Caco-2 (cell line): ENCODE measurements at regions of chr7 and their contacts with region 1.

Region 1: DNA sequence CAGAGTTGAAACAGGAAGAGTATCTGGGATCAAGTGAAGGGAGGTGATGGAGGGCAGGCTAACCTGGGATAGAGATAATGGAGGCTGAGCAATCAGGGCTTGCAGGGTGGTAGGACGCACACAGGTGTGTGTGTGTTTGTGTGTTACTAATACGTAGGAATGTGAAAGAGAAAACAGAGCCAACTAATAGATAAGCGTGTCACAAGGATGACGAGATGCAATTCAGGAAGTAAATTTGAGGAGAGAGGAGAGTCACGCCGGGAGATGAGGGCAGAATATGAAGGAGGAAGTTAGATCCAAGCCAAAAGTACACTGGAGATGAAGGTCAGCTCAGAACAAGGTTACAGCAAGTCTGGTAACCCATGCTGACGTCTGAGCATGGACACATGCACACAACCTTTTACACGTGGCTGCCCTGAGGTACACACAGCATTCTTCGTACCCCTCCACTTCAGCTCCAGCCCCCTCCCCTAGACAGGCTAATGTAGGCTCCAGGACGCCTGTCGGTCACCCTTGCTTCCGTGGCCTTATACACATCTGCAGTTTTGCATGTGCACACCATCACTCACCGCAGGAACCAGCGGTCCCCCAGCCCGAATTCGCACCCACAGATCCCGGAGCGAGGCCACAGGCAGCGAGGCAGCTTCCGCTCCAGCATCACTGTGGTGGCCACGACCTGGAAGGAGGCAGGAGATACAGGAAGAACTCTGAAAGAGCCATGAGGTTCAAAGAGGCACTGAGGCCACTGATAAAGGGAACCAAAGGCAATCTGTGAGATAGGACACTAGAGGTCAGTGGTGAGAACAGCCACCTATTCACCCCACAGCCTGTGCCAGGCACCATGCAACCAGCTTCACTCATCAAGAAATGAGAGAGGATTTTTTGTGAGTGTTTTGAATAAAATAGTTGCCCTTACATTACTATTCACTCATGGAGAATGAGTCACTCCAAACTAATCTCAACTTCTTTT is 23.7 kb upstream of the TRPV6 start:
- DNase-seq: no peak
- H3K4me3 ChIP-seq: no peak overlapping the region
- H3K4me3 Mint-ChIP-seq: no peak overlapping the region
- H3K27ac Mint-ChIP-seq: peak overlapping the region; percentile 7
- H3K4me1 ChIP-seq: peaks cover 49% of the 10 kb centered on the region
- H3K4me1 Mint-ChIP-seq: peaks cover 56% of the 10 kb centered on the region
- H3K27me3 ChIP-seq: no peaks in the 10 kb centered on the region
- H3K27me3 Mint-ChIP-seq: no peaks in the 10 kb centered on the region
- CTCF ChIP-seq: peak; percentile 28 to 33

Region 2: GRCh38 chr7:141864775-141865447 is 1044.3 kb before region 1 on chr7:
- CTCF ChIA-PET with region 1: no interaction called
- POLR2A ChIA-PET with region 1: no interaction called
- intact Hi-C with region 1: no loop called
- DNase-seq: no peak
- H3K4me3 ChIP-seq: no peak overlapping the region
- H3K4me3 Mint-ChIP-seq: no peak overlapping the region
- H3K27ac Mint-ChIP-seq: no peak overlapping the region
- H3K4me1 ChIP-seq: peaks cover 11% of the 10 kb centered on the region
- H3K4me1 Mint-ChIP-seq: peaks cover 6% of the 10 kb centered on the region
- H3K27me3 ChIP-seq: no peaks in the 10 kb centered on the region
- H3K27me3 Mint-ChIP-seq: peaks cover 17% of the 10 kb centered on the region
- CTCF ChIP-seq: no peak

Region 3: DNA sequence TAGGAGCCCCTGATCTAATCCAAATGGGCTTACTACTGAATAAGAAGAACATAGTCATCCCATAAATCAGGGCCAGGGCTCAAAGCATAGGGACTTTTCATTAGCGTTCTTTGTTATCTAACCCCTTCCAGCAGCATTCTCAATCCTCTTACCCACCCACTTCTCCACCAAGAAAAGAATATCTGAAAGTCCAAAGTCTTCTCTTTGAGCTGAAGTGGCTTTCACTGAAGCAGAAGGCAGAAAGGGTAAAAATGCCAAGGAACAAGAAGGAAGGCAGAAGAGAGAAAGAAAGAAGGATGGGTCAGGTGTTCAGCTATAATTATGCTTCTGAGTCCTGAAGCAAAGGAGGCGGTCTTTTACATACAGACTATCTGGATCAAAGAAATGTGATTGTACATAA is 14.2 kb after region 1 on chr7:
- CTCF ChIA-PET with region 1: interaction called, 6 read pairs
- POLR2A ChIA-PET with region 1: no interaction called
- intact Hi-C with region 1: loop called (anchors 1 kb)
- DNase-seq: no peak
- H3K4me3 ChIP-seq: no peak overlapping the region
- H3K4me3 Mint-ChIP-seq: no peak overlapping the region
- H3K27ac Mint-ChIP-seq: peak overlapping the region; percentile 65
- H3K4me1 ChIP-seq: peaks cover 20% of the 10 kb centered on the region
- H3K4me1 Mint-ChIP-seq: peaks cover 15% of the 10 kb centered on the region
- H3K27me3 ChIP-seq: no peaks in the 10 kb centered on the region
- H3K27me3 Mint-ChIP-seq: no peaks in the 10 kb centered on the region
- CTCF ChIP-seq: no peak